Cardiac septum (tissue), 1 donor: ENCODE measurements at regions of chr3 and their contacts with region 1.

Region 1: GRCh38 chr3:6799264-6799915 is 61.5 kb upstream of the GRM7 start:
- DNase-seq: no peak

Region 2: DNA sequence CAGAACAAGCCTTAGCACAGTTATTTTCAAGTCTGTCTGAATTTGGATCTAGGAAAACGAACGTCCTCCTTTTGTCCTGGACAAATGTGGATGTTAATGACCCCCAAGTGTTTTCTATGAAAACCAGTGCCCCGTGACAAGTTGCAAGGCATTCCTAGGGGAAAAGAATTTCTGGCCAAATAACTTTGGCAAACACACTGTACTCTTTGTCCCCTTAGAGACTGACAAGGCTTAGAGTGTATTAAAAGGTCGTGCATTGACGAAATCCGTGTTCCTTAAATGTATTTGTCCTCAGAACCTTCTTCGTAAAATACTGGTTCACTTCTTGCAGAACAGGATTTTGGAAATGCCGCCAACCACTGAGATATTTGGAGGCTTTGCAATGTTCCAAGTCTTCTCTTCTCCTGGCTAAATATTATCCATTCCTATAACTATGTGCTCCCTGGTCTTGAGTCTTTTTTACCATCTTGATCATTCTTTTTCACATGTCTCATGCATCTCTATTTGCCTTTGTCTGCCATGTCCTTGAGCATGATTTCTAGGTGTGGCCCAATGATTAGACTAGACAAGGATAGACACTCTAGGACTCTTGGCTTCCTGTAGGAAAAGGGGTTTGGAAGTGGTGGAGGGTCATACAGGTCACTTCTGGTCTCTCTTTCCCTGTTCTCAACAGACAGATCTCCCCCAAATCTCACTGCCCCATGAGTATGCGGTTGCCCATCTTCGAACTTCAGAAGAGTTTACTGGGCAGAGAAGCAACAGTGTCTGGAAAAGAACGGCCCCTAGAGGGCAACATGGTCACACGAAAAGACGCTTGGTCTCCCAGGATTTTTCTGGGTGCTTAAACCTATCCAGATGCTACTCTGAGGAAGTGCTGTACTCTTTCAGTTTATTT is 1494.4 kb before region 1 on chr3:
- intact Hi-C with region 1: loop called (anchors 5 kb)
- DNase-seq: no peak

Region 3: GRCh38 chr3:7188551-7188950 is 389.2 kb after region 1 on chr3:
- intact Hi-C with region 1: no loop called
- DNase-seq: no peak